GM12878 (cell line): ENCODE measurements at regions of chr6 and their contacts with region 1.

Region 1: GRCh38 chr6:83192871-83193746 is at the starts of genes PGM3 and RWDD2A:
- DNase-seq: peak; percentile 56
- ATAC-seq: peak; percentile 97
- H3K4me3 ChIP-seq: peak within 1 kb of the TSS; percentile 79
- H3K27ac ChIP-seq: peak within 1 kb of the TSS; percentile 89
- H3K4me1 ChIP-seq: peaks cover 5% of the 10 kb centered on the region
- H3K27me3 ChIP-seq: no peaks in the 10 kb centered on the region
- CTCF ChIP-seq: no peak
- EP300 ChIP-seq: no peak
- POLR2A ChIP-seq: peak; percentile 96
- RAD21 ChIP-seq: no peak
- polyA plus RNA-seq, gene PGM3: 23.1 to 28.6 TPM
- polyA plus RNA-seq, gene RWDD2A: 3.2 to 3.4 TPM

Region 2: GRCh38 chr6:83086751-83087150 is 106.4 kb before region 1 on chr6:
- CTCF ChIA-PET with region 1: no interaction called
- POLR2A ChIA-PET with region 1: no interaction called
- RAD21 ChIA-PET with region 1: no interaction called
- SMC1A ChIA-PET with region 1: interaction called, 3 read pairs
- in situ Hi-C with region 1: no loop called
- intact Hi-C with region 1: loop called (anchors 5 kb)
- DNase-seq: peak; percentile 51
- ATAC-seq: peak; percentile 96
- H3K4me3 ChIP-seq: peak overlapping the region; percentile 72
- H3K27ac ChIP-seq: peak overlapping the region; percentile 83
- H3K4me1 ChIP-seq: no peaks in the 10 kb centered on the region
- H3K27me3 ChIP-seq: no peaks in the 10 kb centered on the region
- CTCF ChIP-seq: no peak
- EP300 ChIP-seq: no peak
- POLR2A ChIP-seq: peak; percentile 41; the same call in 1 of the 2 replicates
- RAD21 ChIP-seq: no peak